CD4-positive, alpha-beta T cell (primary cell): ENCODE measurements at regions of chr9 and their contacts with region 1.

Region 1: GRCh38 chr9:5292141-5292540 is 12.4 kb downstream of the RLN2 start:
- DNase-seq: no peak
- ATAC-seq: no peak
- H3K4me3 ChIP-seq: no peak overlapping the region
- H3K4me3 Mint-ChIP-seq: no peak overlapping the region
- H3K27ac ChIP-seq: no peak overlapping the region
- H3K27ac Mint-ChIP-seq: no peak overlapping the region
- H3K4me1 ChIP-seq: no peaks in the 10 kb centered on the region
- H3K4me1 Mint-ChIP-seq: no peaks in the 10 kb centered on the region
- H3K27me3 ChIP-seq: no peaks in the 10 kb centered on the region
- H3K27me3 Mint-ChIP-seq: no peaks in the 10 kb centered on the region
- CTCF ChIP-seq: no peak

Region 2: GRCh38 chr9:5336688-5337087 is 44.5 kb after region 1 on chr9:
- CTCF ChIA-PET with region 1: no interaction called
- POLR2A ChIA-PET with region 1: no interaction called
- intact Hi-C with region 1: no loop called
- DNase-seq: peak in 12 of 14 experiments; percentile 5 to 74 (median 32)
- ATAC-seq: peak; percentile 41
- H3K4me3 ChIP-seq: peak overlapping the region; percentile 17
- H3K4me3 Mint-ChIP-seq: peak overlapping the region; percentile 81
- H3K27ac ChIP-seq: peak overlapping the region; percentile 47 to 52
- H3K27ac Mint-ChIP-seq: peak overlapping the region; percentile 78
- H3K4me1 ChIP-seq: peaks cover 19% of the 10 kb centered on the region
- H3K4me1 Mint-ChIP-seq: peaks cover 54% of the 10 kb centered on the region
- H3K27me3 ChIP-seq: no peaks in the 10 kb centered on the region
- H3K27me3 Mint-ChIP-seq: no peaks in the 10 kb centered on the region
- CTCF ChIP-seq: no peak

Region 3: DNA sequence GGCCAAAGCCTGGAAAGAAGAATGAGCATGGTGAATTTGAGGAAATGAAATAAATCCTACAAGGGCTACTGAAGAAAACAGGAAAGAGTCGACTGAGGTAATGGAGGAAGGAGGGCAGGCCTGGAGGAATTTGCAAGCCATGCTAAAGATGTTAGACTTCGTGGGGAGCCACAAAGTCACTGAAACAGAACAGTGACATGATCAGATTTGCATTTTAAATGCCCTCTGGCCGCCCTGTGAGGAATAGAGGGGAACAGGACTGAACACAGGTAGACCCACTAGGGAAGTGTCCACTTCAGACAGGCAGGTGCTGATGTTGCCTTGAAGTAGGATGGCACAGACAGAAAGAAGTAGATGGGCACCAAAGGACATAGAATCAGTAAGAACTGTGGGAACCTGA is 90.3 kb after region 1 on chr9:
- CTCF ChIA-PET with region 1: no interaction called
- POLR2A ChIA-PET with region 1: no interaction called
- intact Hi-C with region 1: loop called in 1 of 2 experiments (anchors 5 kb)
- DNase-seq: no peak
- ATAC-seq: no peak
- H3K4me3 ChIP-seq: no peak overlapping the region
- H3K4me3 Mint-ChIP-seq: no peak overlapping the region
- H3K27ac ChIP-seq: no peak overlapping the region
- H3K27ac Mint-ChIP-seq: no peak overlapping the region
- H3K4me1 ChIP-seq: no peaks in the 10 kb centered on the region
- H3K4me1 Mint-ChIP-seq: peaks cover 6% of the 10 kb centered on the region
- H3K27me3 ChIP-seq: no peaks in the 10 kb centered on the region
- H3K27me3 Mint-ChIP-seq: no peaks in the 10 kb centered on the region
- CTCF ChIP-seq: no peak